ENCODE measurements at regions of chr7 and their contacts with region 1.

Region 1: DNA sequence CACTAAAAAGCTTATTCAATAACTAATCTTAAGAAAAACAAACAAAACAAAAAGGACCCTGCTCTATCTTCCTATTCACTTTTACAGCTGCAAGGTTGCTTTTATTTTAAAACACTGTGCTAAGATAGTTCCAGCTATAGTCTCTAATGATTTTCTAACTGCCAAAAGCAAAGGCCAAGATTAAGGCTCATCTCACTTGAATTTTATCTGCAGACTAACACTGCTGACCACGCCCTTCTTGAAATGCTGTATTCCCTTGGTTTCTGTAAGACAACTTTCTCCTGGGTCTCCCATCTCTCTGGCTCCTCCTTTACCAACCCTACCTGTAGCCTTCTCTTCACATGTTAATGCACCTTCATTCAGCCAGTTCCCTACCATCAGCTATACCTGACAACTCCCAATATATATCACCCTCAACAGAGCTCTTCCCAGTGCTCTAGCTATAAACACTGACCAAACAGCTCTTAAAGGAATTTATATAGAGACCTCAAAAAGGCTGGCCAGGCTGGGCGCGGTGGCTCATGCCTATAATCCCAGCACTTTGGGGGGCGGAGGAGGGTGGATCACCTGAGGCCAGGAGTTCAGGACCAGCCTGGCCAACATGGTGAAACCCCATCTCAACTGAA is 11.7 kb downstream of the SRPK2 start:
- DNase-seq: peak; percentile 32 to 81 (median 53)
- ATAC-seq: peak; percentile 81
- H3K4me3 ChIP-seq: no peak overlapping the region
- H3K27ac ChIP-seq: peak overlapping the region; percentile 32; the same call in 1 of the 3 replicates
- H3K4me1 ChIP-seq: peaks cover 21 to 22% of the 10 kb centered on the region in 2 experiments
- H3K27me3 ChIP-seq: no peaks in the 10 kb centered on the region
- CTCF ChIP-seq: no peak
- EP300 ChIP-seq: peak; percentile 21; the same call in 1 of the 2 replicates
- POLR2A ChIP-seq: no peak
- RAD21 ChIP-seq: no peak

Region 2: DNA sequence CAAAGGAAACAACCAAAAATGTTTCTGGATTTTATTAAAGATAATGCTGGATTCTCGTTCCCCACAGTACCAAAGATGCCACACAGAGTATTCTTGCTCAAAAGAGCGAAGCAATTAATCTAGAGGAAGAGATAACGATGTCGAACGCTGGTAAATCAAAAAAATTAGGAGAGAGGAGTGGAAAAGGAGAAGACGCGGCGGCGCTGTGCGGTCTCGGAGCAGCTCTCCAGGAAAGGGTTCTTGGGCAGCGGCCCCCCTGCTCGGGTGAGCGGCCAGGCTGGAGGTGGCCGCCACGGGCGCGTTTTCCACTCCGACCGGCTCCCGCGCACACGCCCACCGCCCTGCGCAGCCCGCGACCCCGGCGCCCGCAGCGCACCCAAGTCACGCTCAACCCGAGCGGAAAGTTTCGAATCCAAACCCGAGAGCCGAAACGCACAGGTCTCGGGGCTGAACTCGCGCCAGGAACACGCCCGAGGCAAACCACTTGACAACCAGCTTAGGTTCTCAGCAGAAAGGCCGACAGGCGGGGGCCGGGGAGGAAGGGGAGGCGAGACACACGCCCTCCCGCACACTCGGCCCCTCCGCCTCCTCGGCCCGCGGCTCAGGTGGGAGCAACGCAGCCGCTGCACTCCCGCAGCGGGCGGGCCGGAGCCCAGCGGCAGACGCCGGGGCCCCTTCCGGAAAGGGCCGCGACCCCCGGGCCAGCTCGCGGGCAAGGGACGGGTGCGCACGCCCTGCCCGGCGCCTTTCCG is 10.8 kb after region 1 on chr7:
- CTCF ChIA-PET with region 1: no interaction called
- POLR2A ChIA-PET with region 1: interaction called, 32 read pairs
- in situ Hi-C with region 1: no loop called
- intact Hi-C with region 1: no loop called
- DNase-seq: peak in 3 of 4 experiments; percentile 79 to 84 (median 81)
- ATAC-seq: peak; percentile 80
- H3K4me3 ChIP-seq: peak overlapping the region; percentile 90
- H3K27ac ChIP-seq: peak overlapping the region; percentile 77
- H3K4me1 ChIP-seq: peaks cover 13 to 15% of the 10 kb centered on the region in 2 experiments; a peak in 4 of 5 replicates
- H3K27me3 ChIP-seq: no peaks in the 10 kb centered on the region
- CTCF ChIP-seq: no peak
- EP300 ChIP-seq: no peak
- POLR2A ChIP-seq: no peak
- RAD21 ChIP-seq: no peak

Measured in K562 (cell line).